Sigmoid colon (tissue), 7 donors: ENCODE measurements at regions of chr5 and their contacts with region 1.

Region 1: DNA sequence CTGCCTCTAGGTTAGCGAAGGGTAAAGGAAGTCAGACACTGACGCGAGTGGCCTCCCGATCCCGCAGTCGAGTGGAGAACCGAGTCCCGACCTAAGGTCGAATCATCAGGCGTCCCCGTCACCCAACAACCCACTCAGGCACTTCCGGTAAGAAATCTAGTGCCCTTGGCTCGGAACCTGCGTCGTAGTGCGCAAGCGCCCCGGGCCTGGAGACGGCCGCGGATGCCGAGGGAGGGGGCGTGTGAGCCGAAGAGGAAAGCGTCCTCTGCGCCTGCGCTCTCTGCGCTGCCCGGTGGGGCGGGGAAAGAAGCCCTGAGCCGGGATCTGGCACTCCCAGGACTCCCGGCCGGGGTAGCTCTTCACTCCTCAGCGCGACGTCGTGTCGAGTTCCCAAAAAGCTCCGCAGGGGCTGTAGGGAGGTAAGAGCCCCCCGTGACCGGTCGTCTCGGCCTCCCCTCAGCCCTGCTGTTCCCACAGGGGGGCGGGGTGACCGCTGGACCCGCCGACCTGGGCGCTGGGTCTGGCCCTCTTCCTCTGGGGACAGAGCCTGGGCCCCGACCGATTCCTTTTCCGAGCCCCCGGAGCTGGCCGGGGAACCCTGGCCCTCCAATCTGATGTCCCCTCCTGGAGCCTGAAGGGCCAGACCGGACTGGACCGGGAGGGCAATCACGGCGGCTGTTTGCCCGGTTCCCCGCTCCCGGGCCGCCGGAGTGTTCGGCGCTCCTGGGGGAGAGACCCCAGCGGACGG is at the start of gene ZFYVE16:
- DNase-seq: peak; percentile 99
- H3K4me3 ChIP-seq: peak within 1 kb of the TSS; percentile 65 to 96 (median 80)
- H3K27ac ChIP-seq: peak within 1 kb of the TSS; percentile 93 to 99 (median 96)
- H3K4me1 ChIP-seq: peaks cover 0 to 39% (median 27%) of the 10 kb centered on the region in 4 donors
- H3K27me3 ChIP-seq: no peaks in the 10 kb centered on the region
- CTCF ChIP-seq: peak; percentile 29 to 73 (median 56)
- EP300 ChIP-seq: peak in 1 of 4 donors; percentile 39
- POLR2A ChIP-seq: peak; percentile 80 to 82
- total RNA-seq, gene ZFYVE16: 29.6 to 43.2 (median 34.4) TPM

Region 2: GRCh38 chr5:79514391-79515105 is 893.4 kb before region 1 on chr5:
- intact Hi-C with region 1: loop called (anchors 5 kb)
- DNase-seq: peak; percentile 97
- H3K4me3 ChIP-seq: peak overlapping the region; percentile 79 to 99 (median 91)
- H3K27ac ChIP-seq: peak overlapping the region; percentile 94 to 100 (median 97)
- H3K4me1 ChIP-seq: peaks cover 0 to 38% (median 16%) of the 10 kb centered on the region in 4 donors
- H3K27me3 ChIP-seq: no peaks in the 10 kb centered on the region
- CTCF ChIP-seq: no peak
- EP300 ChIP-seq: peak in 1 of 4 donors; percentile 60
- POLR2A ChIP-seq: peak; percentile 76 to 77

Region 3: GRCh38 chr5:79990598-79991507 is 417.1 kb before region 1 on chr5 and contains the start of gene MTX3:
- intact Hi-C with region 1: no loop called
- DNase-seq: peak; percentile 89
- H3K4me3 ChIP-seq: peak within 1 kb of the TSS; percentile 64 to 90 (median 88)
- H3K27ac ChIP-seq: peak within 1 kb of the TSS; percentile 76 to 82 (median 78)
- H3K4me1 ChIP-seq: peaks cover 0 to 18% (median 17%) of the 10 kb centered on the region in 4 donors
- H3K27me3 ChIP-seq: no peaks in the 10 kb centered on the region
- CTCF ChIP-seq: no peak
- EP300 ChIP-seq: no peak
- POLR2A ChIP-seq: peak in 1 of 2 donors; percentile 38
- total RNA-seq, gene MTX3: 14.5 to 18.3 (median 17.1) TPM

Region 4: DNA sequence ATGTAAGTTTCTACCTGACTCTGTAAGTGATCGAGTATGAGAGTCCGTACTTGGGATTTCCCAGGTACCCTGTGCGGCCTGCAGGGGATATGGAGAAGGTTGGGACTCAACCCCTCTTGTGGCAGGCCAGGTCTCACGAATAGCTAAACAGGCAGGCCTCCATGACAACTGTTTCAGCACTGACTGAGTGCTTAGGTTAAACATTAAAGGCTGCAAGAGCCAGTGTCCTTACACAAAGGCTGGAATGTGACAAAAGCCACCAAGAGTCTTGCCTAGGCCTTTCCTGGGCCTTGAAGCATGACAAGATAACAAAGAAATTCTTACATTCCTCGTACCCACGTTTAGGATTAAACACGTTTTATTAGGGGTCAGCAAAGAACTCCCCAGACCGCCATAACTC is 314.1 kb before region 1 on chr5:
- intact Hi-C with region 1: loop called (anchors 5 kb)
- DNase-seq: no peak
- H3K4me3 ChIP-seq: no peak overlapping the region
- H3K27ac ChIP-seq: peak overlapping the region in 1 of 4 donors; percentile 42
- H3K4me1 ChIP-seq: peaks cover 0 to 14% (median 2%) of the 10 kb centered on the region in 4 donors
- H3K27me3 ChIP-seq: no peaks in the 10 kb centered on the region
- CTCF ChIP-seq: no peak
- EP300 ChIP-seq: no peak
- POLR2A ChIP-seq: no peak

Region 5: DNA sequence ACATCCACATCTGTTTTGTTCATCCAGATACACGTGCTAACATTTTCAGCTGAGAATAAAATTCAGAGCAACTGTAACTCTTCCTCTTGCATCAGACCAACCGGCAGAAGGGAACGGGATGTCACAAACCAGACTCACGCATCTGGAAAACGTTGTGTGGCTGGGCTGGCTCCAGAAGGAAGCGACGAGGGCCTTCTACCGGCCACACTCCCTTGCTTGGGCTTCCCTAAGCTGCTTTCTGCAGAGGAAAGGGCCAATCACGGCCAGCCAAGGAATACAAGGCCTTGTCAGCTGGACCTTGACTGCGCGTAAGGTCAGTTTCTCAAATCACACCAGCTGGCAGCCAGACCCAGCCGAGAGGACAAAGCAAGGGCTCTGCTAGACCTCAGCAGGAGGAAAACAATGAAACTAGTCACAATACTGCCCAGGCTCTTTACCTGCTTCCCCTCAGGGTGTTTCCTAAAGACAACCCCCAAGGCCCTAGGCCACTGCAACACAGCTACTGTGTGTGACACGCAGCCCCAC is 266.7 kb before region 1 on chr5:
- intact Hi-C with region 1: loop called (anchors 5 kb)
- DNase-seq: peak; percentile 98
- H3K4me3 ChIP-seq: no peak overlapping the region
- H3K27ac ChIP-seq: peak overlapping the region; percentile 69 to 91 (median 88)
- H3K4me1 ChIP-seq: peaks cover 0 to 38% (median 29%) of the 10 kb centered on the region in 4 donors
- H3K27me3 ChIP-seq: no peaks in the 10 kb centered on the region
- CTCF ChIP-seq: no peak
- EP300 ChIP-seq: peak; percentile 18 to 87 (median 46)
- POLR2A ChIP-seq: no peak

Region 6: DNA sequence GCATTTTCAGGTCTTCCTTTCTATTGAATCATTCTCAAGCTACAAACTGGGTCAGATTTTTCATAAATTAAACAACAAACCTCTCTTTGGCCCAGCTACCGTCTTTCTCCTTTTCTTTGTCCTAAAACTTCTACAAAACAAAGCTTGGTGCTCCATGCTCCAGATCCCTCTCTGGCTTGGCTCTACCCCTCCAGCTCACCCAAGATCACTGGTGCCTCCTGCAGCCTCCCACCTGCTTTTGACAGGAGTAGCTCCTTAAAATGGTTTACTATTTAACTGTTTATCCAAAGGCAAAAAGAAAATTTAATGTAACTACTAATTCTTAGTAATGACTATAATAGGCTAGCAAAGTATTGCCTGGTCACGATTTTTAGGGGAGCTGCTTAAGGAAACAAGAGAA is 141.3 kb before region 1 on chr5:
- intact Hi-C with region 1: no loop called
- DNase-seq: no peak
- H3K4me3 ChIP-seq: no peak overlapping the region
- H3K27ac ChIP-seq: no peak overlapping the region
- H3K4me1 ChIP-seq: peaks cover 0 to 9% (median 4%) of the 10 kb centered on the region in 4 donors
- H3K27me3 ChIP-seq: no peaks in the 10 kb centered on the region
- CTCF ChIP-seq: no peak
- EP300 ChIP-seq: no peak
- POLR2A ChIP-seq: no peak

Region 7: DNA sequence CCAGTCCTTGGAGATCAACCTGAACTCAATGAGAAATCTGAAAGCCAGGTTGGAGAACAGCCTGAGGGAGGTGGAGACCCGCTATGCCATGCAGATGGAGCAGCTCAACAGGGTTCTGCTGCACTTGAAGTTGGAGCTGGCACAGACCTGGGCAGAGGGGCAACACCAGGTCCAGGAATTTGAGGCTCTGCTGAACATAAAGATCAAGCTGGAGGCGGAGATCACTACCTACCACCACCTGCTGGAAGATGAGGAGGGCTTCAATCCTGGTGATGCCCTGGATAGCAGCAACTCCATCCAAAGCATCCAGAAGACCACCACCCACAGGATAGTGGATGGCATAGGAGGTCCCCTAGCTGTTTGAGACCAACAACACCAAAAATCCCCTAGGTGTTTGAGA is 118.6 kb before region 1 on chr5:
- intact Hi-C with region 1: no loop called
- DNase-seq: no peak
- H3K4me3 ChIP-seq: no peak overlapping the region
- H3K27ac ChIP-seq: no peak overlapping the region
- H3K4me1 ChIP-seq: no peaks in the 10 kb centered on the region
- H3K27me3 ChIP-seq: no peaks in the 10 kb centered on the region
- CTCF ChIP-seq: no peak
- EP300 ChIP-seq: no peak
- POLR2A ChIP-seq: no peak

Region 8: GRCh38 chr5:80662108-80662507 is 254.2 kb after region 1 on chr5:
- intact Hi-C with region 1: loop called (anchors 5 kb)
- DNase-seq: no peak
- H3K4me3 ChIP-seq: no peak overlapping the region
- H3K27ac ChIP-seq: no peak overlapping the region
- H3K4me1 ChIP-seq: no peaks in the 10 kb centered on the region
- H3K27me3 ChIP-seq: no peaks in the 10 kb centered on the region
- CTCF ChIP-seq: no peak
- EP300 ChIP-seq: no peak
- POLR2A ChIP-seq: no peak